CD8-positive, alpha-beta memory T cell (primary cell): ENCODE measurements at regions of chr20 and their contacts with region 1.

Region 1: DNA sequence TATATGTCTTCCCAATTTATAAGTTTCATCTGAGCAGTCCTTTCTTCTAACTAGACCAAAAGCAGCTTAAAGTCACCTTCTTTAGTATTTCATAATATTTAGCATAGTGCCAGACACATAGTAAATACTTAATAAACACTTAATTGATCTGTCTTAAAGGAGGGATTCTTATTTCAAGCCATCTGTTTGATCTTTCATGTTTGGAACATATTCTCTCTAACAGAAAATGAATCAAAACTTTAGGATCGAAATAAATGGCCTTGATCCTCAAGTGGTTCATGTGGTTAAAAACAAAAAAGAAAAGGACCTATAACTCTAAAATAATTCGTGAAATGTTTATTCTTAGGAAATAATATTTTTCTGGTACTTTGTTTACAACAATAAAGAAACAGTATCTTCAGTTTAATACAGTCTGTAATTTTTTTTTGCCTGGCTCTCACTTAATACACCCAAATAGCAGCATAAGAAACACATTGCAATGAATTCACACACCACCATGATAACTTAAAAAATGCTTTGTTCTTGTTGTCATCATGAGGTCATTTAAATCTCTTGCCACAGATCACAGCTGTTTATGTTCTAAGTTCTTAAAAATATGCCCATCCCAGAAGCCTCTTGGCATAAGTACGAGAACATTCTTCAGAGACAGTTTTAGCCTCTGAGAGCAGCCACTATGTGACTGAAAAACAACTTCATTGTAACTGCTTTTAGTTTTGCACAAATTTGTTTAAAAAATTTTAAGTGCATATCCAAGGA is 48.1 kb downstream of the ESF1 start:
- DNase-seq: no peak
- H3K4me3 ChIP-seq: no peak overlapping the region
- H3K4me3 Mint-ChIP-seq: no peak overlapping the region
- H3K27ac ChIP-seq: no peak overlapping the region
- H3K27ac Mint-ChIP-seq: peak overlapping the region in 1 of 8 donors; percentile 63
- H3K4me1 ChIP-seq: no peaks in the 10 kb centered on the region
- H3K4me1 Mint-ChIP-seq: peaks cover 2 to 12% (median 3%) of the 10 kb centered on the region in 3 donors
- H3K27me3 ChIP-seq: no peaks in the 10 kb centered on the region
- H3K27me3 Mint-ChIP-seq: no peaks in the 10 kb centered on the region

Region 2: GRCh38 chr20:13131688-13132087 is 604.9 kb before region 1 on chr20:
- CTCF ChIA-PET with region 1: no interaction called
- POLR2A ChIA-PET with region 1: interaction called, 15 read pairs
- DNase-seq: no peak
- H3K4me3 ChIP-seq: no peak overlapping the region
- H3K4me3 Mint-ChIP-seq: no peak overlapping the region
- H3K27ac ChIP-seq: no peak overlapping the region
- H3K27ac Mint-ChIP-seq: no peak overlapping the region
- H3K4me1 ChIP-seq: no peaks in the 10 kb centered on the region
- H3K4me1 Mint-ChIP-seq: peaks cover 0 to 7% (median 2%) of the 10 kb centered on the region in 3 donors
- H3K27me3 ChIP-seq: no peaks in the 10 kb centered on the region
- H3K27me3 Mint-ChIP-seq: peaks cover 7 to 9% of the 10 kb centered on the region in 2 donors

Region 3: DNA sequence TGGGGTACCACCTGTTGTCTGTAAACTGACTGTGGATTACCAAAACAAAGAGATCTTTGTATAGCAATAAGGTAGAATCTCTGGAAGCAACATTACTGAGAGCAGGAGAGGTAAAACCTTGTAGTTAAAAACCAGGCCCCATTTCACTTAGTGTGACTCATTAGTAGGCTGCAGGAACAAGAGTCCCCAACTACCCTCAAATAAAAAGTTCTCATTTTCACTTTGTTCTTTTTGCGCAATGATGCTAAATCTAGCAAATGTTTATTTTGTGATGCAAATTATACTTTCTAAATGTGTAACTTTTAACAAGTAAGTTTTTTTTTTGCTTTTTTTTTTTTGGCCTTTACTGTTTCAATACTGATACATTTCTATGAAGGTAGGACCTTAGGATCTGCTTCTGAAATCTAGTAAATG is 19.0 kb before region 1 on chr20:
- CTCF ChIA-PET with region 1: no interaction called
- POLR2A ChIA-PET with region 1: no interaction called
- DNase-seq: no peak
- H3K4me3 ChIP-seq: no peak overlapping the region
- H3K4me3 Mint-ChIP-seq: no peak overlapping the region
- H3K27ac ChIP-seq: no peak overlapping the region
- H3K27ac Mint-ChIP-seq: no peak overlapping the region
- H3K4me1 ChIP-seq: no peaks in the 10 kb centered on the region
- H3K4me1 Mint-ChIP-seq: no peaks in the 10 kb centered on the region
- H3K27me3 ChIP-seq: no peaks in the 10 kb centered on the region
- H3K27me3 Mint-ChIP-seq: no peaks in the 10 kb centered on the region